ENCODE measurements at regions of chr1 and their contacts with region 1.

Region 1: GRCh38 chr1:213852107-213852506 is 135.7 kb upstream of the PROX1 start:
- DNase-seq: peak in 7 of 14 experiments; percentile 12 to 75 (median 40)
- ATAC-seq: peak; percentile 93
- H3K4me3 ChIP-seq: no peak overlapping the region
- H3K4me3 Mint-ChIP-seq: no peak overlapping the region
- H3K27ac ChIP-seq: peak overlapping the region in 1 of 2 donors; percentile 67
- H3K27ac Mint-ChIP-seq: no peak overlapping the region
- H3K4me1 ChIP-seq: peaks cover 25% of the 10 kb centered on the region
- H3K4me1 Mint-ChIP-seq: peaks cover 9% of the 10 kb centered on the region
- H3K27me3 ChIP-seq: no peaks in the 10 kb centered on the region
- H3K27me3 Mint-ChIP-seq: no peaks in the 10 kb centered on the region
- CTCF ChIP-seq: no peak

Region 2: GRCh38 chr1:213761845-213762407 is 90.2 kb before region 1 on chr1:
- CTCF ChIA-PET with region 1: no interaction called
- POLR2A ChIA-PET with region 1: interaction called, 12 read pairs
- intact Hi-C with region 1: loop called in 1 of 2 experiments (anchors 5 kb)
- DNase-seq: peak; percentile 15 to 69 (median 41)
- ATAC-seq: peak; percentile 100
- H3K4me3 ChIP-seq: no peak overlapping the region
- H3K4me3 Mint-ChIP-seq: peak overlapping the region; percentile 49
- H3K27ac ChIP-seq: no peak overlapping the region
- H3K27ac Mint-ChIP-seq: peak overlapping the region; percentile 77
- H3K4me1 ChIP-seq: peaks cover 11% of the 10 kb centered on the region
- H3K4me1 Mint-ChIP-seq: peaks cover 16% of the 10 kb centered on the region
- H3K27me3 ChIP-seq: no peaks in the 10 kb centered on the region
- H3K27me3 Mint-ChIP-seq: no peaks in the 10 kb centered on the region
- CTCF ChIP-seq: no peak

Region 3: DNA sequence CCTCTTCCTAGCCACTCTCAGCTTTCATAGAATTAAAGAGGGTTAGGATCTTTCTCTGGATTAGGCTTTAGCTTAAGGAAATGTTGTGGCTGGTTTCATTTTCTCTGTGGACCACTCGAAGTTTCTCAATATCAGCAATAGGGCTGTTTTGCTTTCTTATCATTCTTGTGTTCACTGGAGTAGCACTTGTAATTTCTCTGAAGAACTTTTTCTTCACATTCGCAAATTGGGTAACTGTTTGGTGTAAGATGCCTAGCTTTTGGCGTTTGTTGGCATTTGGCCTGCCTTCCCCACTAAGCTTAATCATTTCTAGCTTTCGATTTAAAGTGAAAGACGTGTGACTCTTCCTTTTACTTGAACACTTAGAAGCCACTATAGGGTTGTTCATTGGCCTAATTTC is 75.1 kb before region 1 on chr1:
- CTCF ChIA-PET with region 1: no interaction called
- POLR2A ChIA-PET with region 1: no interaction called
- intact Hi-C with region 1: no loop called
- DNase-seq: no peak
- ATAC-seq: no peak
- H3K4me3 ChIP-seq: no peak overlapping the region
- H3K4me3 Mint-ChIP-seq: no peak overlapping the region
- H3K27ac ChIP-seq: no peak overlapping the region
- H3K27ac Mint-ChIP-seq: no peak overlapping the region
- H3K4me1 ChIP-seq: no peaks in the 10 kb centered on the region
- H3K4me1 Mint-ChIP-seq: no peaks in the 10 kb centered on the region
- H3K27me3 ChIP-seq: no peaks in the 10 kb centered on the region
- H3K27me3 Mint-ChIP-seq: no peaks in the 10 kb centered on the region
- CTCF ChIP-seq: no peak

Region 4: DNA sequence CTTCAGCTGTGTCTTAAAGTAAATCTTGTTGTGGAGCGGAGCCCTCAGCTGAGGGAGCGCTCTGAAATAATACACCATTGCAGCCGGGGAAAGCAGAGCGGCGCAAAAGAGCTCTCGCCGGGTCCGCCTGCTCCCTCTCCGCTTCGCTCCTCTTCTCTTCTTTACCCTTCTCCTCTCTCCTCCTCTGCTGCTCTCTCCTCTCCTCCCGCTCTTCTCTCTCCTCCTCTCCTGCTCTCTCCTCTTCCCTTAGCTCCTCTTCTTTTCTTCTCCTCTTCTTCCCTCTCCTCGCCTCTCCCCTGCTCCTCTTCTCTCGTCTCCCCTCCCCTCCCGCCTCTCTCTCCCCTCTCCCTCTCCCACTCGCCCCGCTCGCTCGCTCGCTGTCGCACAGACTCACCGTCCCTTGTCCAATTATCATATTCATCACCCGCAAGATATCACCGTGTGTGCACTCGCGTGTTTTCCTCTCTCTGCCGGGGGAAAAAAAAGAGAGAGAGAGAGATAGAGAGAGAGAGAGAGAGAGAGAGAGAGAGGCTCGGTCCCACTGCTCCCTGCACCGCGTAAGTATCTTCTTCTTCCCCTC is 135.9 kb after region 1 on chr1 and contains the start of gene PROX1:
- CTCF ChIA-PET with region 1: no interaction called
- POLR2A ChIA-PET with region 1: no interaction called
- intact Hi-C with region 1: loop called in 1 of 2 experiments (anchors 2 kb)
- DNase-seq: peak in 10 of 14 experiments; percentile 21 to 70 (median 44)
- ATAC-seq: peak; percentile 87
- H3K4me3 ChIP-seq: peak within 1 kb of the TSS; percentile 44
- H3K4me3 Mint-ChIP-seq: peak within 1 kb of the TSS; percentile 92
- H3K27ac ChIP-seq: no peak within 1 kb of the TSS
- H3K27ac Mint-ChIP-seq: peak within 1 kb of the TSS; percentile 85
- H3K4me1 ChIP-seq: peaks cover 42% of the 10 kb centered on the region
- H3K4me1 Mint-ChIP-seq: peaks cover 58% of the 10 kb centered on the region
- H3K27me3 ChIP-seq: peaks cover 69 to 97% of the 10 kb centered on the region in 2 experiments
- H3K27me3 Mint-ChIP-seq: peaks cover 100% of the 10 kb centered on the region
- CTCF ChIP-seq: no peak
- total RNA-seq, gene PROX1: 0.03 TPM in 1 of 2 experiments, not detected in the other

Measured in CD4-positive, alpha-beta T cell (primary cell).